ENCODE measurements at regions of chr2 and their contacts with region 1.

Region 1: DNA sequence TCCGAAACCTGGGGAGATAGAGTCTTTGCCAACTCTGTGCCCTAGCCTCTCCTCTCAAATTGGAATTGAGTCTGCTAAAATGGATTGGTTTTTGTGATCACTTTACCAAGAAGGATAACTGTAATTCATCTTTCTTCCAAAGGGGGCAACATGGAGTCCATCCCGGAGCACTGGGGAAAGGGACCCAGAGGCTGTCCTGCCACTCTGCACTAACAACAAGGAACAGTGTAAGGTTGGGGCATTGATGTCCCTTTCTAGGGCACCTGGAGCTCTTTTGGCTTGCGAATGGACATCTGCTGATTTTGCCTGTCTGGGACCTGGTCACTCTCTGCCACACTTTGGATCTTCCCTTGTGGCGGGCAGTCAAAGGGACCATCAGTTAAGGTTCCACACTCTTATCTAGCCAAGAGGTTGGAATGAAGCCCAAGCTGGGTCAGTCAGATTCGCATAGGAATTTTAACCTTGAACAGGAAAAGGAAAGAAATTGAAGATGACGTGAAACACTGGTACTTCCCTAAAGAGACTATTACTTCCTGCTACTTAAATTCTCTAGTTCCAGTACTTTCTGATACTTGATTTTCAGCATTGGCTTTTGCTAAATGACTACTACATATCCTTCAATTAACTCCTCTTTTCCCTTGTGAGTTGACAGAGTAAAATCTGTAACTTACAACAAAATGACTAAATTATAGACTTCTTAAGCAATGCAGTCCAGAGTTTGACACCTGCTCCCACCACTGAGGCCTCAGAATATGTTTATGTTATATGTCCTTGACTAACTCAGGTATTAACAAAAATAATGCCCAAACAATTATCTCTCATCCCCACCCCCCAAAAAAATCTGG is 64.7 kb upstream of the KLF7 start:
- DNase-seq: no peak
- H3K4me3 Mint-ChIP-seq: no peak overlapping the region
- H3K27ac Mint-ChIP-seq: peak overlapping the region; percentile 73
- H3K4me1 Mint-ChIP-seq: peaks cover 40% of the 10 kb centered on the region
- H3K27me3 Mint-ChIP-seq: no peaks in the 10 kb centered on the region

Region 2: GRCh38 chr2:207288628-207289027 is 58.1 kb after region 1 on chr2:
- CTCF ChIA-PET with region 1: no interaction called
- POLR2A ChIA-PET with region 1: no interaction called
- intact Hi-C with region 1: loop called (anchors 2 kb)
- DNase-seq: peak; percentile 76
- H3K4me3 Mint-ChIP-seq: no peak overlapping the region
- H3K27ac Mint-ChIP-seq: peak overlapping the region; percentile 9
- H3K4me1 Mint-ChIP-seq: peaks cover 80% of the 10 kb centered on the region
- H3K27me3 Mint-ChIP-seq: peaks cover 4% of the 10 kb centered on the region

Measured in activated CD4-positive, alpha-beta memory T cell treated with anti-CD3 and anti-CD28 coated beads for 36 hours (primary cell).